Activated CD8-positive, alpha-beta memory T cell treated with anti-CD3 and anti-CD28 coated beads, Interleukin-2, amount 10 ng/mL, durations not matched to agents 7 days and 5 days (primary cell): ENCODE measurements at regions of chr16 and their contacts with region 1.

Region 1: GRCh38 chr16:4574919-4575705 is 19.0 kb downstream of the C16orf96 start:
- DNase-seq: no peak
- ATAC-seq: peak; percentile 54
- H3K4me3 Mint-ChIP-seq: no peak overlapping the region
- H3K27ac Mint-ChIP-seq: no peak overlapping the region
- H3K4me1 Mint-ChIP-seq: peaks cover 11% of the 10 kb centered on the region
- H3K27me3 Mint-ChIP-seq: no peaks in the 10 kb centered on the region

Region 2: DNA sequence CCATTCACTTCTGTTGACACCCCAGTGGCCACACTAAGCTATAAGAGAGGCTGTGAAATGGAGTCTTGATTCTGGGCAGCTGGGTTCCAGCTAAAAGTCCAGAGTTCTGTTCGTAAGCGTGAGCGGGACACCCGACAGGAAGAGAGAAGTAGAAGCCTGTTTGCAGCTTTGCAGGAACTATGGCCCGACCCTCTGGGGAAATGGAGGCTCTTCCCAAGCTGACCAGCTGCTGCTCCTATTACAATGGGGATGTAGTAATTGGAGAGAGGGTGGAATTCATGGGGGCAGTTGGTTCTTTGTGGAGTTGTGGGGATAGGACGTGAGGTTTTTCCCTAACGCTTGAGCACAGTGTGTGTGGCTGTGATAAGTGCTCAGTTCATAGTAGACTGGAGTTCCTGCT is 11.2 kb after region 1 on chr16:
- CTCF ChIA-PET with region 1: interaction called, 11 read pairs
- DNase-seq: no peak
- ATAC-seq: no peak
- H3K4me3 Mint-ChIP-seq: no peak overlapping the region
- H3K27ac Mint-ChIP-seq: no peak overlapping the region
- H3K4me1 Mint-ChIP-seq: peaks cover 3% of the 10 kb centered on the region
- H3K27me3 Mint-ChIP-seq: peaks cover 13% of the 10 kb centered on the region

Region 3: DNA sequence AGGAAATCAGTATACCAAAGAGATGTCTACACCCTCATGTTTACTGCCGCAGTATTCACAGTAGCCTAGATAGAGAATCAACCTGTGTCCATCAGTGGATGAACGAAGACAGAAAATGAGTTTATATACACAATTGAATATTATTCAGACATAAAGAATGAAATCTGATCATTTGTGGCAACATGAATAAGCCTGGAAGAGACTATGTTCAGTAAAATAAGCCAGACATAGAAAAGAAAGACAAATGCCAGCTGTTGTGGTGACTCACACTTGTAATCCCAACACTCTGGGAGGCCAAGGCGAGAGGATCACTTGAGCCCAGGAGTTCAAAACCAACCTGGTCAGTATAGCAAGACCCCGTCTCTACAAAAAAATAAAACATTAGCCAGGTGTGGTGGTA is 134.4 kb after region 1 on chr16:
- CTCF ChIA-PET with region 1: no interaction called
- DNase-seq: no peak
- ATAC-seq: no peak
- H3K4me3 Mint-ChIP-seq: no peak overlapping the region
- H3K27ac Mint-ChIP-seq: no peak overlapping the region
- H3K4me1 Mint-ChIP-seq: no peaks in the 10 kb centered on the region
- H3K27me3 Mint-ChIP-seq: no peaks in the 10 kb centered on the region